Mammary epithelial cell (primary cell): ENCODE measurements at regions of chr5 and their contacts with region 1.

Region 1: DNA sequence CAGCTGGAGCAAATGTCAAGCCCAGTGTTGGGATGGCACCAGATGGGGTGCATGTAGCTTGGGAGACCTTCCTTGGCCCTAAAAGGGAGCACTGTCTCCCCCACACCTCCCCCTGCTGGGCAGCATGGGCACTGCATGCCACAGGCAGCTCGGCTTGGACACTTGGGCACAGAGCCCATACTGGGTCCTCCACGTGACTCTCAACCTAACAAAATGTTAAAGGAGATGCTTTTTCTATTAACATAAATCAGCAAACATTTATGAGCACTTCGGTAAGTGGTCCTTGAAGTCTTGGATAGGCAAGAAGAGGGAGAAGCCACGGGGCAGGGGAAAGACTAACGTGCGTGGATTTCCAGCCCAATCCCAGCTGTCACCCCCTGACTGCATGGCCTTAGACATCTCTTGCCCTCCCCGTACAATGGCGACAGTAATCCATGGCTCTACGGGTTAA is 23.9 kb upstream of the MAPK9 start:
- DNase-seq: peak; percentile 12
- H3K4me3 ChIP-seq: no peak overlapping the region
- H3K27ac ChIP-seq: no peak overlapping the region
- H3K4me1 ChIP-seq: no peaks in the 10 kb centered on the region
- H3K27me3 ChIP-seq: no peaks in the 10 kb centered on the region
- CTCF ChIP-seq: peak; percentile 62 to 86

Region 2: GRCh38 chr5:180201051-180201987 is 114.5 kb before region 1 on chr5:
- CTCF ChIA-PET with region 1: no interaction called
- dilution Hi-C with region 1: no loop called
- in situ Hi-C with region 1: no loop called
- intact Hi-C with region 1: loop called (anchors 5 kb)
- DNase-seq: no peak
- H3K4me3 ChIP-seq: no peak overlapping the region
- H3K27ac ChIP-seq: no peak overlapping the region
- H3K4me1 ChIP-seq: no peaks in the 10 kb centered on the region
- H3K27me3 ChIP-seq: no peaks in the 10 kb centered on the region
- CTCF ChIP-seq: peak in 1 of 2 donors; percentile 30

Region 3: DNA sequence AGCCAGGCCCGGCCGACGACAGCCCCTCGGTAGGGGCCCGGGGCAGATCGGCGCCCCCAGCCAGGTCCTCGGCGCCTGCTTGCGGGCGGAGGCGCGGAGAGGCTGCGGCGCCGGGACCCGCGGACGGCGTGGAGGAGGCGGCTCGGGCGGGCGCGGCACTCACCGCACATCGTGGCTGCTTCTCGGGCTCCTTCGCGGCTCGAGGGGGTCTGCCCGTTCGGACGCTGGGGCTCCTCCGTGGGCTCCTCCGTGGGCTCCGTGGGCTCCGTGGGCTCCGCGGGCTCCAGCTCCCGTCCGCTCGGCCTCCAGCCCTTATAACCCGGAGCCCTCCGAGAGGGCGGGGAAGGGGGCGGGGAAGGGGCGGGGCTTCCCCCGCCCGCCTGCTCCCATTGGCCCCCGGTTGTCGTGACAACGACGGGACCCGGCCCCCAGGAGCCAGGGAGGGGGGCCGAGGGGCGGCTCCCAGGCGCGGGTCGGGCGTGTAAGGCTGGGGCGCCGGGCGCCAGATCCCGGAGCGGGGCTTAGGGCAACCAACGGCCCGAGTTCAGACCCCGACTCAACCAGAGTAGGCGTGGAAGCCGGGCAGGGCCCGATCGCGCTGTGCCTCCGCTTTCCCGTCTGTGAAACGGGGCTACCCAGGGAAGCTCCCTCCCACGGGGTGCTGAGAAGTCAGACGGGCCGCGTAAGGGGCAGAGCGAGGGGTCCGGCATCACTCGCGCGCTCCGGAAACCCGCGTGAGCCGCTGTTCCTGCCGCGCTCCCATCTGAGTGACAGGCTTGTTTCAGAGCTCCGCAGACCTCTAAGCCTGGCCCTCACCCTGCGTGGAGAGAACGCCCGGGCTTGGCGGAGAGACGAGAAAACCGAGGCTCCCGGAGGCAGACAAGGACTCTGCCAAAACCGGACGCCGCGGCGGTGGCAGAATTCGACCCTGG is 37.5 kb after region 1 on chr5 and contains the start of gene GFPT2:
- CTCF ChIA-PET with region 1: no interaction called
- dilution Hi-C with region 1: no loop called
- in situ Hi-C with region 1: no loop called
- intact Hi-C with region 1: no loop called
- DNase-seq: peak; percentile 30
- H3K4me3 ChIP-seq: peak within 1 kb of the TSS; percentile 27 to 32 (median 31)
- H3K27ac ChIP-seq: no peak within 1 kb of the TSS
- H3K4me1 ChIP-seq: peaks cover 12% of the 10 kb centered on the region
- H3K27me3 ChIP-seq: peaks cover 26% of the 10 kb centered on the region
- CTCF ChIP-seq: no peak
- total RNA-seq, gene GFPT2: 0.83 TPM in 1 of 2 donors, not detected in the other

Region 4: DNA sequence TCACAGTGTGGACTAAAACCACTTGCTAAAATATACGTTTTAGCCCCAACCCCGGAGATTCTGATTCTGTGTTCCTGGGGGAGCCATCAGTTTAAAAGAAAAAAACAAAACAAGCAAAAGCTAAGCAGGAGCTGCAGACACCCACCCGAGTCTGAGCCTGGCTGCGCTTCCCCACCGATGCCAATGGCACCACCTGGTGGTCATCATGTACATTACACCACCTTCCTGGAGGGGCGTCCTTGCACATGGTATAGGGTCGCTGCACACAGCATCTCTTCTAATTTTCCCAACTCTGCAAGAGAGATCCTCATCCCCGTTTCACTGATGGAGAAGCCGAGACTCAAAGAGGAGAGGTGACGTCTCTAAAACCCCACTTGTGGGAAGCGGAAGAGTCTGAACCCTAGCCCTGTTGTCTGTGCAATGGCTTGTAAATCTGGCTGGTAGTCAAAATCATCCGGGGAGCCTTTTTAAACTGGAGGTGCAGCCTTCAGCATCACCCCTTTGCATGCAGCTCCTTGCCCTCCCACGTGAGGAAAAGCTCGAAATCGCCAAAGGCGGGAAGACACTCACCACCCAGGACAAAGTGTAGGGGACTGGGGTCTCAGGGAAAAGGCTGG is 155.3 kb after region 1 on chr5:
- CTCF ChIA-PET with region 1: no interaction called
- dilution Hi-C with region 1: no loop called
- in situ Hi-C with region 1: no loop called
- intact Hi-C with region 1: no loop called
- DNase-seq: peak; percentile 12
- H3K4me3 ChIP-seq: no peak overlapping the region
- H3K27ac ChIP-seq: no peak overlapping the region
- H3K4me1 ChIP-seq: no peaks in the 10 kb centered on the region
- H3K27me3 ChIP-seq: no peaks in the 10 kb centered on the region
- CTCF ChIP-seq: peak; percentile 85 to 89

Region 5: DNA sequence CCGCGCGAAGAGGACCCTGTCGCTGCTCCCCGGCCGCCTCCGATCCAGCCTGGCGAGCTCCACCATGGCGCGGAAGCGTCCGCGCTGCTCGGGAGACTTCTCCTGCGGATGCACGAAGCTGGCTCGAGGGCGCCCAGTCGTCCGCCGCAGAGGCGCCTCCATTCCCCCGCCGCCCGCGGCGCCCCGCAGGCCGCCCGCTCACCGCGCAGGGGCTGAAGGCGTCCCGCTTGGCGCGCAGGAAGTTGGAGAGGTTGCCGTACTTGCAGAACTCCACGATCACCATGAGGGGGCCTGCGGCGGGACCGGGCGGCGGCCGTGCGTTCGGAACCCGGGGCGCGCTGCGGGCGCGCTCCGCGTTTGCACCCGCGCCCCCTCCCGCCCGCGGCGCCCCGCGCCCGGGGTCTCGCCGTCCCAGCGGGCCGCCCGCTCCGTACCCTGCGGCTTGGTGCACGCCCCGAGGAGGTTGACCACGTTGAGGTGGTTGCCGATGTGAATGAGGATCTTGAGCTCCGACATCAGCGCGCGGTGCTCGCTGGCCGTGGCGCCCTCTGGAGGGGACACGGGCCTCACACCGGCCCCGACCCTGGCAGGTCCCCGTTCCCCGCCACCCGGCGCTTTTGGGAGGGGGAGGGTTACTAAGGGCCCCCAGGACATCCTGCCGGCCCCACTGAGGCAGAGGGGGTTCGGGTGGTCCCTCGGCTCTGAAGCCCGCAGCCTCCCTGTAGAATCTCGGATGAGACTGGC is 303.2 kb after region 1 on chr5:
- CTCF ChIA-PET with region 1: no interaction called
- dilution Hi-C with region 1: no loop called
- in situ Hi-C with region 1: no loop called
- intact Hi-C with region 1: no loop called
- DNase-seq: peak; percentile 28
- H3K4me3 ChIP-seq: peak overlapping the region in 1 of 3 experiments; percentile 32
- H3K27ac ChIP-seq: no peak overlapping the region
- H3K4me1 ChIP-seq: peaks cover 5% of the 10 kb centered on the region
- H3K27me3 ChIP-seq: peaks cover 4% of the 10 kb centered on the region
- CTCF ChIP-seq: no peak